ENCODE measurements at regions of chr4 and their contacts with region 1.

Region 1: GRCh38 chr4:183840311-183840710 is 64.8 kb upstream of the STOX2 start:
- DNase-seq: peak; percentile 43
- ATAC-seq: no peak
- H3K4me3 ChIP-seq: no peak overlapping the region
- H3K27ac ChIP-seq: no peak overlapping the region
- H3K4me1 ChIP-seq: no peaks in the 10 kb centered on the region
- H3K27me3 ChIP-seq: no peaks in the 10 kb centered on the region
- CTCF ChIP-seq: peak; percentile 56 to 68 (median 66)
- POLR2A ChIP-seq: no peak
- RAD21 ChIP-seq: peak; percentile 85

Region 2: GRCh38 chr4:182955411-182955810 is 884.9 kb before region 1 on chr4:
- CTCF ChIA-PET with region 1: no interaction called
- POLR2A ChIA-PET with region 1: no interaction called
- RAD21 ChIA-PET with region 1: no interaction called
- intact Hi-C with region 1: no loop called
- DNase-seq: no peak
- ATAC-seq: no peak
- H3K4me3 ChIP-seq: no peak overlapping the region
- H3K27ac ChIP-seq: no peak overlapping the region
- H3K4me1 ChIP-seq: no peaks in the 10 kb centered on the region
- H3K27me3 ChIP-seq: no peaks in the 10 kb centered on the region
- CTCF ChIP-seq: no peak
- POLR2A ChIP-seq: no peak
- RAD21 ChIP-seq: no peak

Region 3: GRCh38 chr4:184100297-184100885 is 260.1 kb after region 1 on chr4:
- CTCF ChIA-PET with region 1: interaction called, 5 read pairs
- POLR2A ChIA-PET with region 1: no interaction called
- RAD21 ChIA-PET with region 1: interaction called in 1 of 2 experiments, 4 read pairs
- intact Hi-C with region 1: loop called (anchors 1 kb)
- DNase-seq: peak; percentile 10
- ATAC-seq: peak; percentile 97
- H3K4me3 ChIP-seq: no peak overlapping the region
- H3K27ac ChIP-seq: no peak overlapping the region
- H3K4me1 ChIP-seq: no peaks in the 10 kb centered on the region
- H3K27me3 ChIP-seq: no peaks in the 10 kb centered on the region
- CTCF ChIP-seq: peak; percentile 68 to 75 (median 75); a peak in 5 of 6 replicates
- POLR2A ChIP-seq: no peak
- RAD21 ChIP-seq: peak; percentile 82

Region 4: GRCh38 chr4:184168406-184169019 is 328.2 kb after region 1 on chr4:
- CTCF ChIA-PET with region 1: interaction called, 4 read pairs
- POLR2A ChIA-PET with region 1: no interaction called
- RAD21 ChIA-PET with region 1: no interaction called
- intact Hi-C with region 1: loop called (anchors 1 kb)
- DNase-seq: peak; percentile 22
- ATAC-seq: peak; percentile 97
- H3K4me3 ChIP-seq: no peak overlapping the region
- H3K27ac ChIP-seq: no peak overlapping the region
- H3K4me1 ChIP-seq: no peaks in the 10 kb centered on the region
- H3K27me3 ChIP-seq: no peaks in the 10 kb centered on the region
- CTCF ChIP-seq: peak; percentile 62 to 76 (median 66)
- POLR2A ChIP-seq: no peak
- RAD21 ChIP-seq: peak; percentile 71

Region 5: DNA sequence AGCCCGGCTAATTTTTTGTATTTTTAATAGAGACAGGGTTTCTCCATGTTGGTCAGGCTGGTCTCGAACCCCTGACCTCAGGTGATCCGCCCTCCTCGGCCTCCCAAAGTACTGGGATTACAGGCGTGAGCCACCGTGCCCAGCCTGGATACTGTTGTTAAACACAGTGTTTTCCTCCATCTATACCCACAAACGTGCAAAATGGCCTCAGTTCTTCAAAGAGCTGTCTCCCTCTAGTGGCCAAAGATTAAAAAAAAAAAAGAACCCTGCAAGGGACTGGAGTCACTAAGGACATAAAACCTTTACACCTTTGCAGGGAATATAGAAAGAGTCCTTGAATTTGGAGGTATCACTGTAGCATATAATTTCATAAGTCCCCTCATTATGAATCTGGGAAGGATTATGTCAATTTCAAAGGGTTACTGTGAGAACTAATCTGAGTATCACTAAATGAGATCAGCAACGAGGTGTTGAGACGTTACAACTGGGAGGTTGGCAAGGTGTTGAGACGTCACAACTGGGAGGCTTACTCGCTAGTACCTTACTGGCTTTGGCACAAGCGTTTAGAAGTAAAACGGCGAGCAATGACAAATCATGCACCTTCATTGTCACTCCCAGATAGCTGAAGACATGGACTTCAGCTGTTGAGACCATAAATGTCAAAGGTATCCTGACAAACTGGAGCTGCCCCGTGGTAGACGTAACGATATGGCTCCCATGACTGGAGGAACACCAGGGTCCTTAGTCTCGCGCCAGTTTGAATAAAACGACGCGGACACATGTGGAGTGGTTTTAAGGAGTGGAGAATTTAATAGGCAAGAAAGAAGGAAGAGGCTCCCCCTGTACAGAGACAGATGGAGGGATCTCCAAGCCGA is 410.7 kb after region 1 on chr4:
- CTCF ChIA-PET with region 1: no interaction called
- POLR2A ChIA-PET with region 1: no interaction called
- RAD21 ChIA-PET with region 1: no interaction called
- intact Hi-C with region 1: loop called (anchors 5 kb)
- DNase-seq: peak; percentile 34
- ATAC-seq: peak; percentile 64
- H3K4me3 ChIP-seq: no peak overlapping the region
- H3K27ac ChIP-seq: no peak overlapping the region
- H3K4me1 ChIP-seq: no peaks in the 10 kb centered on the region
- H3K27me3 ChIP-seq: no peaks in the 10 kb centered on the region
- CTCF ChIP-seq: peak; percentile 22 to 57 (median 30); a peak in 5 of 6 replicates
- POLR2A ChIP-seq: no peak
- RAD21 ChIP-seq: peak; percentile 37; the same call in 1 of the 2 replicates

Measured in HCT116 (cell line).